Keratinocyte (primary cell): ENCODE measurements at regions of chr21 and their contacts with region 1.

Region 1: DNA sequence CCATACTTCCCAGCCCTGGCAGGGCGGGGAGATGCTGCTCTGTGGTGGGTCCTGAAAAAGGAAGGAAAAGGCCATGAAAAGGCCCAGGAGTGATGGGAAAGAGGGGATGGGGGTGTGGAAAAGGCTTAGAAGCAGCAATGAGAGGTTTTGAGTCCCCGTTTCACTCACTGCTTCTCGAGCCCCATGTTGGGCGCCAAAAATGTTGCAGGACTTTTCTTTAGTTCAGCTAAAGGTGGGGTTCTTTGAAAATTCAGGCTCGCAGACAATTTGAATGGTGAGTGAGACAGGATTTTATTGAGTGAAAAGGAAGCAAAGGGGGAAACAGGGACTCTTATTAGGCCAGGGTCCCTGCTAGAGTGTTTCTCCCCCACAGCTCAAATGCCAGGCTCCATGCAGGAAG is 93.1 kb downstream of the MRPS6 start:
- DNase-seq: no peak
- H3K4me3 ChIP-seq: no peak overlapping the region
- H3K27ac ChIP-seq: no peak overlapping the region
- H3K4me1 ChIP-seq: no peaks in the 10 kb centered on the region
- H3K27me3 ChIP-seq: no peaks in the 10 kb centered on the region
- CTCF ChIP-seq: no peak

Region 2: DNA sequence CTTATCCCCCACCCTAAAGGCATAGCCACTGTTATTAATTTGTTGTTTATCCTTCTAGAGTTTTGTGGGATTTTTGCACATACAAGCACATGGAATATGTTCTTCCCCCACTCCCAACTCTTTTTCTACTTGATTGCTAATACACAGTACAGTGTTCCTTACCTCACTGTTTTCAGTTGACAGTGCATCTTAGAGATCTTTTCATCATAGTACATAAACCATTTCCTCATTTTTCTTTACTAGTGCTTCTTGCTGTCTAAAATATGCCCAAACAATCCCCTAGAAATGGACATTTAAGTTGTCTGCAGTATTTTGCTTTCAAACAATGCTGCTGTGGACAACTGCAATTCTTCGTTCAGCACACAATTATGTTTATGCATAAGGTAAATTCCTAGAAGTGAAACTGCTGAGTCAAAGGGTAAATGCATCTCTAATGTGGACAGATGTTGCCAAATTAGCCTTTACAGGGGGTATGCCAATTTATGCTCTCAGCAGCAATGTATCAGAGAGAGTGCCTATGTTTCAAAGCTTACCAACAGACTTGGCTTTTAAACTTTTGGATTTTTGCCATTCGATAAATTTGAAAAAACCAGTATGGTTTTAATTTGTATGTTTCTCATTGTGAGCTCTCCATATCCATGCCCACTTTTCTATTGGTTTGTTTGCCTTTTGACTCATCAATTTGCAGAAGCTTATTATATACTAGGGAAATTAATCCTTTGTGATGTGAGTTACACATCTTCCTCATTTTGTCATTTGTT is 39.5 kb after region 1 on chr21:
- dilution Hi-C with region 1: loop called (anchors 5 kb)
- DNase-seq: no peak
- H3K4me3 ChIP-seq: no peak overlapping the region
- H3K27ac ChIP-seq: no peak overlapping the region
- H3K4me1 ChIP-seq: peaks cover 9% of the 10 kb centered on the region
- H3K27me3 ChIP-seq: peaks cover 5% of the 10 kb centered on the region
- CTCF ChIP-seq: no peak

Region 3: GRCh38 chr21:34252751-34253150 is 86.3 kb after region 1 on chr21:
- dilution Hi-C with region 1: no loop called
- DNase-seq: no peak
- H3K4me3 ChIP-seq: no peak overlapping the region
- H3K27ac ChIP-seq: no peak overlapping the region
- H3K4me1 ChIP-seq: no peaks in the 10 kb centered on the region
- H3K27me3 ChIP-seq: no peaks in the 10 kb centered on the region
- CTCF ChIP-seq: no peak

Region 4: GRCh38 chr21:34336756-34337391 is 170.4 kb after region 1 on chr21:
- dilution Hi-C with region 1: no loop called
- DNase-seq: no peak
- H3K4me3 ChIP-seq: no peak overlapping the region
- H3K27ac ChIP-seq: no peak overlapping the region
- H3K4me1 ChIP-seq: peaks cover 3% of the 10 kb centered on the region
- H3K27me3 ChIP-seq: peaks cover 11% of the 10 kb centered on the region
- CTCF ChIP-seq: no peak